Ascending aorta (tissue), 2 donors: ENCODE measurements at regions of chr7 and their contacts with region 1.

Region 1: DNA sequence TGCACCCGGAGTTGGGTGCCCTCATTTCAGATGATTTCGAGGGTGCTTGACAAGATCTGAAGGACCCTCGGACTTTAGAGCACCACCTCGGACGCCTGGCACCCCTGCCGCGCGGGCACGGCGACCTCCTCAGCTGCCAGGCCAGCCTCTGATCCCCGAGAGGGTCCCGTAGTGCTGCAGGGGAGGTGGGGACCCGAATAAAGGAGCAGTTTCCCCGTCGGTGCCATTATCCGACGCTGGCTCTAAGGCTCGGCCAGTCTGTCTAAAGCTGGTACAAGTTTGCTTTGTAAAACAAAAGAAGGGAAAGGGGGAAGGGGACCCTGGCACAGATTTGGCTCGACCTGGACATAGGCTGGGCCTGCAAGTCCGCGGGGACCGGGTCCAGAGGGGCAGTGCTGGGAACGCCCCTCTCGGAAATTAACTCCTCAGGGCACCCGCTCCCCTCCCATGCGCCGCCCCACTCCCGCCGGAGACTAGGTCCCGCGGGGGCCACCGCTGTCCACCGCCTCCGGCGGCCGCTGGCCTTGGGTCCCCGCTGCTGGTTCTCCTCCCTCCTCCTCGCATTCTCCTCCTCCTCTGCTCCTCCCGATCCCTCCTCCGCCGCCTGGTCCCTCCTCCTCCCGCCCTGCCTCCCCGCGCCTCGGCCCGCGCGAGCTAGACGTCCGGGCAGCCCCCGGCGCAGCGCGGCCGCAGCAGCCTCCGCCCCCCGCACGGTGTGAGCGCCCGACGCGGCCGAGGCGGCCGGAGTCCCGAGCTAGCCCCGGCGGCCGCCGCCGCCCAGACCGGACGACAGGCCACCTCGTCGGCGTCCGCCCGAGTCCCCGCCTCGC is at the start of gene EGFR:
- DNase-seq: peak; percentile 29 to 91
- H3K4me3 ChIP-seq: peak within 1 kb of the TSS; percentile 88 to 98
- H3K27ac ChIP-seq: peak within 1 kb of the TSS; percentile 97 to 98
- H3K4me1 ChIP-seq: peaks cover 4 to 38% of the 10 kb centered on the region in 2 donors
- H3K27me3 ChIP-seq: no peaks in the 10 kb centered on the region
- CTCF ChIP-seq: no peak
- total RNA-seq, gene EGFR: 33.8 TPM

Region 2: DNA sequence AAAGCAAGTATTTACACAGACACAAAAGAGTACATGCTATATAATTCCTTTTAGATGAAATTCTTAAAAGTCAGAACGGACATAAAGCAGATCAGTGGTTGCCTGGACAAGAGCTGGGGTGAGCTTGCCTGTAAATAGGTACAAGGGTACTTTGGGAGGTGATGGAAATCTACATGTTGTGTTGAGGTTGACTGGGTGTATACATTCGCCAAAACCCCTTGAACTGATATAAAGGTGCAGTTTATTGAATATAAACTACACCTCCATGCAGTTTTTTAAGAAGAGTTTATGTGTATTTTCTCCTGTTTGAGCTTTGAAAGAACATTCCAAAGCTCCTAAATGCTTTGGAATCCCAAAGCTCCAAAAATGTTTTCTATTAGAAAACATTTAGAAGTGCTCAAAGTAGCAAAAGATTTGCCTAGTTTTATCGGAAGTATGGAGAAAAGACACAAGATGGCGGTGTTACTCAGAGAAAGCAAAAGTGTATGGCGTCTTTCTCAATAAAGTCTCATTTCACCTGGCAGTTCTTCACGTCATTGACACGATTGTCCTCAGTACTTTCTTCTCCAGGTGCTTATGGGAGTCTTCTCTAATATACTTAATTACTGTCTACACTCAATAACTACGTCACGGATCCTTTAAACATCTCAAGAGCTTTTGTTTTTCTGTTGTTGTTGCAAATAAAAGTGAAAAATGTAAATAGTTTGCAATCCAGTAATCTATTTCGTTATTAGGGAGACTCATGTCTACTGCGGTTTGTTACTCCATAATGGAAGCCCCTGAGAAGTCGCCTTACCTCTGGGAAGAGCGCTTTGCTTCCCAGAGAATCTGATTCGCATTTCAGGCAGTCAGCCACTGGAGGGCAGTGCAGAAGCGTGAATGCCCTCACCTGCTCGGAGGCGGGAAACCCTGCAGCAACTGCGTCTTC is 244.8 kb before region 1 on chr7:
- intact Hi-C with region 1: loop called (anchors 5 kb)
- DNase-seq: peak in 1 of 2 donors; percentile 88
- H3K4me3 ChIP-seq: peak overlapping the region; percentile 41 to 57
- H3K27ac ChIP-seq: no peak overlapping the region
- H3K4me1 ChIP-seq: peaks cover 0 to 3% of the 10 kb centered on the region in 2 donors
- H3K27me3 ChIP-seq: no peaks in the 10 kb centered on the region
- CTCF ChIP-seq: peak; percentile 72 to 87 (median 83)

Region 3: GRCh38 chr7:54874804-54875203 is 143.8 kb before region 1 on chr7:
- intact Hi-C with region 1: no loop called
- DNase-seq: no peak
- H3K4me3 ChIP-seq: no peak overlapping the region
- H3K27ac ChIP-seq: no peak overlapping the region
- H3K4me1 ChIP-seq: no peaks in the 10 kb centered on the region
- H3K27me3 ChIP-seq: no peaks in the 10 kb centered on the region
- CTCF ChIP-seq: no peak

Region 4: GRCh38 chr7:54967384-54967783 is 51.2 kb before region 1 on chr7:
- intact Hi-C with region 1: no loop called
- DNase-seq: no peak
- H3K4me3 ChIP-seq: no peak overlapping the region
- H3K27ac ChIP-seq: no peak overlapping the region
- H3K4me1 ChIP-seq: no peaks in the 10 kb centered on the region
- H3K27me3 ChIP-seq: no peaks in the 10 kb centered on the region
- CTCF ChIP-seq: no peak

Region 5: GRCh38 chr7:55053651-55054571 is 35.3 kb after region 1 on chr7:
- intact Hi-C with region 1: loop called (anchors 2 kb)
- DNase-seq: peak in 1 of 2 donors; percentile 73
- H3K4me3 ChIP-seq: no peak overlapping the region
- H3K27ac ChIP-seq: peak overlapping the region; percentile 71 to 75
- H3K4me1 ChIP-seq: peaks cover 3 to 41% of the 10 kb centered on the region in 2 donors
- H3K27me3 ChIP-seq: no peaks in the 10 kb centered on the region
- CTCF ChIP-seq: peak; percentile 14 to 59 (median 22)

Region 6: GRCh38 chr7:55065079-55065478 is 46.5 kb after region 1 on chr7:
- intact Hi-C with region 1: loop called (anchors 2 kb)
- DNase-seq: no peak
- H3K4me3 ChIP-seq: peak overlapping the region in 1 of 2 donors; percentile 9
- H3K27ac ChIP-seq: peak overlapping the region; percentile 73 to 77
- H3K4me1 ChIP-seq: peaks cover 4 to 38% of the 10 kb centered on the region in 2 donors
- H3K27me3 ChIP-seq: no peaks in the 10 kb centered on the region
- CTCF ChIP-seq: no peak